ENCODE measurements at regions of chr3 and their contacts with region 1.

Region 1: GRCh38 chr3:10198761-10199649 is 34.3 kb downstream of the IRAK2 start:
- DNase-seq: peak; percentile 78
- H3K4me3 Mint-ChIP-seq: peak overlapping the region; percentile 47
- H3K27ac Mint-ChIP-seq: peak overlapping the region; percentile 90
- H3K4me1 Mint-ChIP-seq: peaks cover 78% of the 10 kb centered on the region
- H3K27me3 Mint-ChIP-seq: no peaks in the 10 kb centered on the region

Region 2: DNA sequence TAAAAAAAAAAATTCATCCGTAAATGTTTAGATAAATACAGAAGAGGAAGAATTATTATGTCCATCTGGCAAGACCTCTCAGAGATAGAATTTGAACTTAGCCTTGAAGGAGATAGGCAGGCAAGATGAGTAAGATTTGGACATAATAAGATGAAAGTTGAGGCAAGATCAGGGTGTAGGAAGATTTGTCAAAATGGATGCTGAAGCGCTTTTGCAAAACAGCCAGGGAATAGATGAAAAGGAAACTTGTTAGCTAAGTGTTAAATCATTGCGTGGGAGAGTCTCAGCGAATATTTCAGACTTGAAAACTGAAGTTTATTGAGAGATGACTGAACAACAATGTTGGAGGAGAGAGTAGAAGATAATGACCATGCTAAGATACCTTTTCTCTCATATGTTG is 76.3 kb before region 1 on chr3:
- intact Hi-C with region 1: no loop called
- DNase-seq: no peak
- H3K4me3 Mint-ChIP-seq: no peak overlapping the region
- H3K27ac Mint-ChIP-seq: peak overlapping the region; percentile 73
- H3K4me1 Mint-ChIP-seq: peaks cover 32% of the 10 kb centered on the region
- H3K27me3 Mint-ChIP-seq: no peaks in the 10 kb centered on the region

Region 3: GRCh38 chr3:10164546-10165393 is 34.2 kb before region 1 on chr3 and contains the start of gene IRAK2:
- intact Hi-C with region 1: loop called (anchors 2 kb)
- DNase-seq: peak; percentile 51
- H3K4me3 Mint-ChIP-seq: peak within 1 kb of the TSS; percentile 82
- H3K27ac Mint-ChIP-seq: peak within 1 kb of the TSS; percentile 44
- H3K4me1 Mint-ChIP-seq: peaks cover 35% of the 10 kb centered on the region
- H3K27me3 Mint-ChIP-seq: no peaks in the 10 kb centered on the region
- total RNA-seq, gene IRAK2: 8.1 and 8.6 TPM in 2 replicates

Region 4: GRCh38 chr3:10180738-10181295 is 18.2 kb before region 1 on chr3:
- intact Hi-C with region 1: no loop called
- DNase-seq: no peak
- H3K4me3 Mint-ChIP-seq: no peak overlapping the region
- H3K27ac Mint-ChIP-seq: peak overlapping the region; percentile 61
- H3K4me1 Mint-ChIP-seq: peaks cover 28% of the 10 kb centered on the region
- H3K27me3 Mint-ChIP-seq: no peaks in the 10 kb centered on the region

Measured in activated T-helper 1 cell treated with anti-CD3 and anti-CD28 coated beads, Interleukin-12 subunit alpha, Interleukin-12 subunit beta, Interleukin-2, Interleukin-4 antibody, amounts not matched to agents 30 ng/mL and 10 ng/mL and 1 ng/mL, durations not matched to agents 14 hours and 24 hours and 36 hours (primary cell).